Panc1 (cell line): ENCODE measurements at regions of chr15 and their contacts with region 1.

Region 1: DNA sequence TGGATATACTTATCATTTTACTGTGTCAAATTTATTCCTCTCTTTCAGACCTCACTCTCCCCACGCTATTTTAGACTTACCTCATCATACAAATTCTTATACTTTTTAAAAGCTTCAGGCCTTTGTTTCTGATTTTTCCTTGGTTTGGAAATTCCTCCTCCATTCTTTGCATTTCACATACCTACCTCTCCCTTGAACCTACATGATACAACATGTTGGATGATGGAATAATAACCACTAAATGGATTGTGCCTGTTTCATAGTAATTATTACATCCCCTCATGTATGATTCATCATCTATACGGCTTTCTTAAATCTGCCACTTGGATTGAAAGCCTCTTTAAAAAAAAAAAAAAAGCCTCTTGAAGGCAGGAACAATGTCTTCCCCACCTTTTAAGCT is 24.6 kb downstream of the TRIP4 start:
- DNase-seq: no peak
- ATAC-seq: no peak
- H3K4me3 ChIP-seq: no peak overlapping the region
- H3K27ac ChIP-seq: no peak overlapping the region
- H3K4me1 ChIP-seq: no peaks in the 10 kb centered on the region
- H3K27me3 ChIP-seq: no peaks in the 10 kb centered on the region
- CTCF ChIP-seq: no peak

Region 2: GRCh38 chr15:64460206-64460734 is 48.1 kb after region 1 on chr15 and contains the start of gene ZNF609:
- CTCF ChIA-PET with region 1: no interaction called
- POLR2A ChIA-PET with region 1: interaction called, 12 read pairs
- in situ Hi-C with region 1: no loop called
- intact Hi-C with region 1: no loop called
- DNase-seq: peak; percentile 64
- ATAC-seq: peak; percentile 93
- H3K4me3 ChIP-seq: peak within 1 kb of the TSS; percentile 58 to 89
- H3K27ac ChIP-seq: peak within 1 kb of the TSS; percentile 89
- H3K4me1 ChIP-seq: peaks cover 38% of the 10 kb centered on the region
- H3K27me3 ChIP-seq: no peaks in the 10 kb centered on the region
- CTCF ChIP-seq: no peak
- total RNA-seq, gene ZNF609: 47.2 TPM

Region 3: GRCh38 chr15:64513823-64514222 is 101.6 kb after region 1 on chr15:
- CTCF ChIA-PET with region 1: no interaction called
- POLR2A ChIA-PET with region 1: interaction called, 10 read pairs
- in situ Hi-C with region 1: no loop called
- intact Hi-C with region 1: no loop called
- DNase-seq: no peak
- ATAC-seq: no peak
- H3K4me3 ChIP-seq: no peak overlapping the region
- H3K27ac ChIP-seq: no peak overlapping the region
- H3K4me1 ChIP-seq: no peaks in the 10 kb centered on the region
- H3K27me3 ChIP-seq: no peaks in the 10 kb centered on the region
- CTCF ChIP-seq: no peak